SK-N-SH (cell line): ENCODE measurements at regions of chr1 and their contacts with region 1.

Region 1: GRCh38 chr1:201792534-201793305 is 36.2 kb upstream of the IPO9 start:
- DNase-seq: peak; percentile 85
- H3K4me3 ChIP-seq: peak overlapping the region in 1 of 2 experiments; percentile 4; a peak in 1 of 4 replicates
- H3K27ac ChIP-seq: peak overlapping the region; percentile 92 to 99
- H3K4me1 ChIP-seq: peaks cover 28 to 41% of the 10 kb centered on the region in 2 experiments
- H3K27me3 ChIP-seq: no peaks in the 10 kb centered on the region
- CTCF ChIP-seq: peak; percentile 98
- EP300 ChIP-seq: no peak
- RAD21 ChIP-seq: peak; percentile 99

Region 2: DNA sequence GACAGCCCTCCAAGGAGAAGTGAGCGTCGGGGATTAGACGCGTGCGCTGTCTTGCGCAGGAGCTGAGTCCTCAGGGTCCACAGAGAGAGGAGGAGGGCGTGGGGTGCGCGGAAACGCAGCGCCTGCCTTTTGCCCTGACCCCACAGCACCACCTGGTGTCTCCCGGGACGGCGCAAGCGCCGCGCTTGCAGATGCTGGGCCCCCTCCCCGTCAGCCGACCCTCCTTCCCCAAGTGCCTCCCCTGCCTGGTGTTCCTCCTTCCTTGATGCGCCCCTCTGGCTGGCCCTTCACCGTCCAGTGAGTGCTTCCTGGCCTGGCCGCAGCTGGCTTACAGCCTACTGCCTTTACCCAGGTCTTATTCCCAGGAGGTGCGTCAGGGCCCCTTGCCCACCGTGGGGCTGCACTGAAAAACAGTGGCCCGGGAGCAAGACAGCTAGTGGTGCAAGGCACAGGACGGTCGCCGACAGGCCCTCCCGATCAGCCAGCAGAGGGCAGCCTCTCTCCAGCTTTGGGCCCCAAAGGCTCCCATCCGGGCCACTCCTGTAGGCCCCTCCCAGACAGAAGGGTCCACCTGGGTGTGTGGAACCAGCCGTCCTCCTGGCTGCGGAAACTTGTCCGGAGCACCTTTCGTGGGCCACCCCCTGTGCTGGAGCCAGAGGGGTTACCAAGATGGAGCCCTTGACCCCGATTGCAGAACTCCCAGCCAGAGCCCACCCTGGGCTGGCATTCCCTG is 310.8 kb before region 1 on chr1:
- CTCF ChIA-PET with region 1: interaction called, 11 read pairs
- POLR2A ChIA-PET with region 1: no interaction called
- DNase-seq: peak; percentile 95
- H3K4me3 ChIP-seq: peak overlapping the region in 1 of 2 experiments; percentile 9; a peak in 1 of 4 replicates
- H3K27ac ChIP-seq: 0 out of 4 replicates have a peak overlapping the region, but pooled peaks of 1 of the 2 experiments have one; percentile 13
- H3K4me1 ChIP-seq: peaks cover 0 to 6% of the 10 kb centered on the region in 2 experiments; a peak in 2 of 4 replicates
- H3K27me3 ChIP-seq: no peaks in the 10 kb centered on the region
- CTCF ChIP-seq: peak; percentile 86
- EP300 ChIP-seq: no peak
- RAD21 ChIP-seq: peak; percentile 93

Region 3: DNA sequence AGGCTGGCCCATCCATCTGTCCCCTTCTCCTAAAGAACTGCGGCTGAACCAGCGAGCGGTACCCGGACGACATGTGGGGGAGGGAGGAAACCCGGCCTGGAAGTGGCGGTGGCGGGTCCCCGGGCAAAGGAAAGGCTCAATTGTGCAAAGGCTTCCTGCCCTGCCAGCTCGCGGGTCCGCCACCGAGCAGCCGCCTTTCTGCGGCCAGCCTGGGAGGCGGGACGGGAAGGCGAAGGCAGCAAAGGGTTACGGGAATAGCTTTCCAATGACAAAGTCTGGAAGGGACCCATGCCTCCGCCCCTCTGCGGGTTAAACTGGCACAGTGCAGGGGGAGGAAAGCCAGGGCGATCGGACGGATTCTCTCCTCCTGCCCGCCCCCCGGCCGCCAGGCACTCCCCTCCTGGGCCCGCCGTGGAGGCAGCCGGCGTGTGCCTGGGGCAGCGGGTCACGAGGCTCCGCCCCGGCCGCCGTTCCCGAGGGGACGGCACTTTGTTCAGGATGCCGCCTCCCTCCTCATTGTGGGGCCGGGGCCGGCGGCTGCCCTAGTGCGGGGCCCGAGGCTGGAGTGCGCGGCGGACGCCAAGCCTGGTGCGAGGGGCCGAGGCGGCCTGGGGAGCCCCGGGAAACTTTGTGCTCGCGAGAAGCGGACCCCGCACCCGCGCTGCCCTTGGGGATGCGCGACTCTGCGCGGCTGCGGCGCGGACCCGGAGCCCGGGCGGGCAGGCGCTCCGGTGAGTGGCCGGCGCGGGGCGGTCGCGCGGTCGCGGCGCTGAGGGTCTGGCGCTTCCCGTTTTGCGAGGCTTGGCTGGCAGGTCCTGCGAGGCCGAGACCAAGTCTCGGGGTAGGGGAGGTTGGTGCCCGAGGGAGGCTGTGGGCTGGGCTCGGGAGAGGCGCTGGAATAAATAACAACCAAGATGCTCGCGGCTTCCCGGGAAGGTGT is 253.8 kb before region 1 on chr1 and contains the start of gene NAV1:
- CTCF ChIA-PET with region 1: interaction called, 14 read pairs
- POLR2A ChIA-PET with region 1: no interaction called
- DNase-seq: peak; percentile 90
- H3K4me3 ChIP-seq: peak within 1 kb of the TSS; percentile 90 to 92
- H3K27ac ChIP-seq: peak within 1 kb of the TSS; percentile 84 to 94
- H3K4me1 ChIP-seq: peaks cover 38 to 46% of the 10 kb centered on the region in 2 experiments
- H3K27me3 ChIP-seq: no peaks in the 10 kb centered on the region
- CTCF ChIP-seq: no peak
- EP300 ChIP-seq: peak in 1 of 2 experiments; percentile 51; a peak in 1 of 4 replicates
- RAD21 ChIP-seq: no peak
- polyA plus RNA-seq, gene NAV1: 13.3 and 16.1 TPM in 2 replicates

Region 4: DNA sequence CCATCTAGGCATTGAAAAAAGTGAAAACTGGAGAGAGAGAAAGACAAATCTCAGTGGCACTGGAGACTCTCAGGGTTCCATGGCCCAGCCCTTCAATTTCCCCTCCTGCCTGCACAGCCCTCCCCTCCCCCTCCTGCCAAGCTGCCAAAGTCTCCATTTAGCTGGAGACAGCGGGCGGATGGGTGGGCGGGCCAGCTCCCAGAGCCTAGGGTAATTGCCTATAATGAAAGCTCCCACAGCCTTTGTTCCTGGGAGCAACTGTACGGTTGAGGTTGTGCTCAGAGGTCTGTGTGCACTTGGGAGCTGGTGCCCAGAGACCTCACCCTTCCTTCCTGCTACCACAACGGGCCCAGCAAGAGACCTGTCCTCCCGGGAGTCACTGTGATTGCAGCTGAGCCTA is 164.2 kb before region 1 on chr1:
- CTCF ChIA-PET with region 1: no interaction called
- POLR2A ChIA-PET with region 1: no interaction called
- DNase-seq: peak; percentile 45
- H3K4me3 ChIP-seq: no peak overlapping the region
- H3K27ac ChIP-seq: peak overlapping the region in 1 of 2 experiments; percentile 40; a peak in 1 of 4 replicates
- H3K4me1 ChIP-seq: peaks cover 19 to 25% of the 10 kb centered on the region in 2 experiments
- H3K27me3 ChIP-seq: no peaks in the 10 kb centered on the region
- CTCF ChIP-seq: no peak
- EP300 ChIP-seq: no peak
- RAD21 ChIP-seq: no peak

Region 5: DNA sequence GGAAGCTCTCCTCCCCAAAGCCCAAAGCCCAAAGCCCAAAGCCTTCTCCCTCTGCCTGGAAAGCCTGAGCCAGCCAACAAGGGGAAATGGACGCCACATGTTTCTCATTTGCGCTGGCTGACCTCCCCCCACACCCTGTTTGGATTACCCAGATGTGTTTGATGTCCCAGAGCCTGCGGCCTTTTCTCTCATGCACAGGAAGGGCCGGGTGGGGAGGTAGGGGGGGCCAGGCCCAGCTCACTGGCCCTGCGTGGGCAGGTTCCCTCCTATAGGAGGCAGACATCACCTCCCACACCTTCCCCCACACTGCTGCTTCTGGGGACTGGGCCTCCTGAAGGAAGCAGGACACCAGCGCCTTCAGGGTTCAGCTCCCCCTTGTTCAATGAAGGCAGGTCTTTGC is 137.5 kb before region 1 on chr1:
- CTCF ChIA-PET with region 1: interaction called, 10 read pairs
- POLR2A ChIA-PET with region 1: no interaction called
- DNase-seq: peak; percentile 95
- H3K4me3 ChIP-seq: no peak overlapping the region; a peak in 1 of 4 replicates
- H3K27ac ChIP-seq: peak overlapping the region; percentile 63 to 94
- H3K4me1 ChIP-seq: peaks cover 58 to 61% of the 10 kb centered on the region in 2 experiments
- H3K27me3 ChIP-seq: no peaks in the 10 kb centered on the region
- CTCF ChIP-seq: peak; percentile 38
- EP300 ChIP-seq: peak; percentile 41 to 89; a peak in 3 of 4 replicates
- RAD21 ChIP-seq: peak; percentile 51

Region 6: GRCh38 chr1:201748335-201748734 is 44.4 kb before region 1 on chr1:
- CTCF ChIA-PET with region 1: interaction called, 26 read pairs
- POLR2A ChIA-PET with region 1: no interaction called
- DNase-seq: no peak
- H3K4me3 ChIP-seq: no peak overlapping the region
- H3K27ac ChIP-seq: peak overlapping the region; percentile 83 to 98
- H3K4me1 ChIP-seq: peaks cover 35 to 71% of the 10 kb centered on the region in 2 experiments
- H3K27me3 ChIP-seq: no peaks in the 10 kb centered on the region
- CTCF ChIP-seq: no peak
- EP300 ChIP-seq: peak; percentile 10 to 89; a peak in 2 of 4 replicates
- RAD21 ChIP-seq: no peak

Region 7: GRCh38 chr1:201774224-201774982 is 18.3 kb before region 1 on chr1:
- CTCF ChIA-PET with region 1: interaction called, 15 read pairs
- POLR2A ChIA-PET with region 1: no interaction called
- DNase-seq: no peak
- H3K4me3 ChIP-seq: no peak overlapping the region
- H3K27ac ChIP-seq: peak overlapping the region; percentile 70 to 99; a peak in 3 of 4 replicates
- H3K4me1 ChIP-seq: peaks cover 2 to 57% of the 10 kb centered on the region in 2 experiments
- H3K27me3 ChIP-seq: no peaks in the 10 kb centered on the region
- CTCF ChIP-seq: no peak
- EP300 ChIP-seq: peak in 1 of 2 experiments; percentile 87; a peak in 2 of 4 replicates
- RAD21 ChIP-seq: no peak

Region 8: GRCh38 chr1:202329891-202330290 is 537.2 kb after region 1 on chr1:
- CTCF ChIA-PET with region 1: no interaction called
- POLR2A ChIA-PET with region 1: no interaction called
- DNase-seq: no peak
- H3K4me3 ChIP-seq: no peak overlapping the region
- H3K27ac ChIP-seq: no peak overlapping the region
- H3K4me1 ChIP-seq: no peaks in the 10 kb centered on the region
- H3K27me3 ChIP-seq: no peaks in the 10 kb centered on the region
- CTCF ChIP-seq: no peak
- EP300 ChIP-seq: no peak
- RAD21 ChIP-seq: no peak